ENCODE measurements at regions of chr16 and their contacts with region 1.

Region 1: GRCh38 chr16:2340564-2341455 is at the start of gene ABCA3:
- DNase-seq: peak; percentile 97
- H3K4me3 ChIP-seq: peak within 1 kb of the TSS; percentile 83 to 93 (median 85)
- H3K27ac ChIP-seq: peak within 1 kb of the TSS; percentile 61 to 79 (median 66)
- H3K4me1 ChIP-seq: peaks cover 19 to 43% (median 26%) of the 10 kb centered on the region in 4 donors
- H3K27me3 ChIP-seq: no peaks in the 10 kb centered on the region
- CTCF ChIP-seq: peak; percentile 98 to 100 (median 99)
- EP300 ChIP-seq: no peak
- POLR2A ChIP-seq: no peak
- total RNA-seq, gene ABCA3: 10.4 to 30.7 (median 18.1) TPM

Region 2: DNA sequence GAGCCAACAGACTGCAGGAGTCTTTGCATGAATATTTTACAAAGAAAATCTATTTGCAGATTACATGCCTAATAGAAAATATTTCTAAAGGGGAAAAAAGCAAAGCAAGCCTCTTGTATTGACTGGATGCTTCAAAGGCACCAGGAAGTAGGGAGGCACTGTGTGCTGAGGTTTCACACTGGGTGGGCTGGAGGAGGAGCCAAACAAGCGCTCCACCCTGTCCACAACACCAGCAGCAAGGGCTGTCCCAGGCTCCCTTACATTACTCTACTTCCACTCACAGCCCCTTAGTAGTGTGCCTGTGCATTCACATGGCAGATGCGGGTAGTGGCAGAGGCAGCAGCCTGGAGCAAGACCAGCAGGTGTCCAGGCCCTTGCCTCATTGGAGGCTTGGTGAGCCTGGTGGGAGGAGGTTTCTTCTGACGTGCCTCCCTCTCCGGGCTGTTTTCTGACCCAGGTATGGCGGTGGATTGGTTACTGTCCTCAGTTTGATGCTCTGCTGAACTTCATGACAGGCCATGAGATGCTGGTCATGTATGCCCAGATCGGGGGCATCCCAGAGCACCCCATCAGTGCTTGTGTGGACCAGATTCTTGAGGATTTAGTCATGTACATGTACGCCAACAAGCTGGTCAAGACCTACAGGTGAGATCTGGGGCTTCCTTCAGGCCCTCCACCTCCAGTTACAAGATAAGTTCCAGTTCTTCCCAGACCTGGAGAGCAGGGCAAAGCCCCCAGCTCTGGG is 81.5 kb after region 1 on chr16:
- intact Hi-C with region 1: loop called (anchors 5 kb)
- DNase-seq: no peak
- H3K4me3 ChIP-seq: no peak overlapping the region
- H3K27ac ChIP-seq: no peak overlapping the region
- H3K4me1 ChIP-seq: no peaks in the 10 kb centered on the region
- H3K27me3 ChIP-seq: no peaks in the 10 kb centered on the region
- CTCF ChIP-seq: no peak
- EP300 ChIP-seq: no peak
- POLR2A ChIP-seq: no peak

Region 3: GRCh38 chr16:2474877-2475412 is 134.1 kb after region 1 on chr16 and contains the start of gene TBC1D24:
- intact Hi-C with region 1: loop called (anchors 2 kb)
- DNase-seq: no peak
- H3K4me3 ChIP-seq: peak within 1 kb of the TSS; percentile 78 to 85 (median 82)
- H3K27ac ChIP-seq: peak within 1 kb of the TSS; percentile 85 to 91 (median 88)
- H3K4me1 ChIP-seq: peaks cover 32 to 63% (median 47%) of the 10 kb centered on the region in 4 donors
- H3K27me3 ChIP-seq: peaks cover 7 to 37% (median 22%) of the 10 kb centered on the region in 4 donors
- CTCF ChIP-seq: peak in 1 of 3 experiments; percentile 31
- EP300 ChIP-seq: no peak
- POLR2A ChIP-seq: peak; percentile 57
- total RNA-seq, gene TBC1D24: 7.0 to 14.1 (median 11.5) TPM

Measured in esophagus muscularis mucosa (tissue), 4 donors.